Panc1 (cell line): ENCODE measurements at regions of chr1 and their contacts with region 1.

Region 1: DNA sequence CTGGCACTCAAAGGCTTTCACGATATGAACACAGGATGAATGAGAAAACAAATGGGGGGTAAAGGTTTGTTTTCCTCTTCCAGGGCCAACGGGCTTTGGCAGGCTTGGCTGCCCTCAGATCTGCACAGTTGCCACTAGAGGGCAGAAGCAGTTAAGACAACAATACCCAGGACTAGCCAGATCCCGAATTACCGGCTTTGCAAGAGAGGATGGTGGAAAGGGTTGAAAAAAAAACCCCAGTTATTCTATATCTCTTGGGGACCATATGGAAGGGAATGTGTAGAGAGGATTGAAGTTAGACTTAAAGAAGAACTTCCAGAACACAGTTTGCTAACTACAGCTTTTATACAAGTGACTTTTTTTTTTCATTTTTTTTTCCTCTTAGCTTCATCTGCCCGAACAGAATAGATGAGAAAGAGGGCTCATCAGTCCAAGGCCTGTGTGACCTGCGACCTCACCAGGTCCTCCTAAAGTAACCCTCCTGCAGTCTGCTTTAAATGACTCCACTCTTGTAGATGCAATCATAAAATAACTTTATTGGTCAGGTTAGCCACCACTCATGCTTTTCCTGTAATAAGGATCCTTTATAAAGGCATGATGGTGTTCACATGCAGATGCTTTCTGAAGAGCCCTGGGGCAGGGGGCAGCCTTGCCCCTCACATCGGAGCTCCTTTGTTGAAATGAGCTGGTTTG is 10.7 kb downstream of the FMOD start:
- DNase-seq: no peak
- ATAC-seq: peak; percentile 94
- H3K4me3 ChIP-seq: no peak overlapping the region
- H3K27ac ChIP-seq: no peak overlapping the region
- H3K4me1 ChIP-seq: no peaks in the 10 kb centered on the region; the same call in 1 of the 2 replicates
- H3K27me3 ChIP-seq: peaks cover 37% of the 10 kb centered on the region
- CTCF ChIP-seq: peak; percentile 92

Region 2: GRCh38 chr1:203316626-203317093 is 23.6 kb before region 1 on chr1:
- CTCF ChIA-PET with region 1: interaction called, 17 read pairs
- POLR2A ChIA-PET with region 1: no interaction called
- in situ Hi-C with region 1: no loop called
- intact Hi-C with region 1: no loop called
- DNase-seq: no peak
- ATAC-seq: peak; percentile 74
- H3K4me3 ChIP-seq: no peak overlapping the region
- H3K27ac ChIP-seq: no peak overlapping the region; the same call in 1 of the 2 replicates
- H3K4me1 ChIP-seq: no peaks in the 10 kb centered on the region; the same call in 1 of the 2 replicates
- H3K27me3 ChIP-seq: peaks cover 2% of the 10 kb centered on the region
- CTCF ChIP-seq: no peak

Region 3: DNA sequence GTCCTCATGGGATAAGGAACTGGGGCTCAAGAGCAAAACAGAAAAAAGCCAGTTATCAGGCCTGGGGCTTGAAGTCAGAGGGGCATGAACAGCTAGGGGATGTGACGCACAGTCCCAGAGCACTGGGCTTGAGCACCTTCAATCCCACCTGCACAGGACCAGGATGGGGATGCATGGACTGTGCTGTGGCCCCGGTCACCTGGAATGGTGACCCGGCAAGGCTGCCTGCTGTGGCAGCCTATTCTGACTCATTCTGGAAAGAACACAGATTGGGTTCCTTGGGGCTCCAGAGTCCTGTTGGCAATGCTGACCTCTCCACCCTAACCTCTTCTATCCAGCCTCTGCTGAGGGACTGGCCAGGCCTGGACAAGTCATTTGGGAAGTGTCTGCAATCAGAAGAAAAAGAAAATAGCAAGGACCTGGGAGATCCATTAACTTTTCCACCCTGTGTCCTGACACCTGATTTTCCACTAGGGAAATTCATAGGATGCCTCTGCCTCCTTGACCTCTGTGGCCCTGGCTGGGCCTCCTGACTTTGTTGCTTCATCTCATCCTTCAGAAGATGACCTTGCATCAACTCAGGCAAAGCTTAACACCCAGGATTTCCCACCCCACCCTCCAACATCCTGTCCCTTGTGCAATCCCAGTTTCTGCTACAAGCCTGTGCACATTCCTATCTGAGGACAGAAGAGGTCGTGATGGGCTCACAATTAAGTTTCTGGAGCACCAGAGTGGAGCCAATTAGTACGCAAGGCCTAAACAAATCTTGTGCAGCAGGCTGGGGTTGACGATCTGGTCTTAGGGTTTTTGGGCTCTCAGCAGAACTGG is 28.6 kb after region 1 on chr1:
- CTCF ChIA-PET with region 1: interaction called, 18 read pairs
- POLR2A ChIA-PET with region 1: no interaction called
- in situ Hi-C with region 1: no loop called
- intact Hi-C with region 1: no loop called
- DNase-seq: no peak
- ATAC-seq: no peak
- H3K4me3 ChIP-seq: no peak overlapping the region
- H3K27ac ChIP-seq: no peak overlapping the region
- H3K4me1 ChIP-seq: no peaks in the 10 kb centered on the region
- H3K27me3 ChIP-seq: peaks cover 6% of the 10 kb centered on the region; the same call in 1 of the 2 replicates
- CTCF ChIP-seq: no peak

Region 4: GRCh38 chr1:203475012-203475981 is 135.0 kb after region 1 on chr1 and contains the start of gene PRELP:
- CTCF ChIA-PET with region 1: no interaction called
- POLR2A ChIA-PET with region 1: interaction called, 10 read pairs
- in situ Hi-C with region 1: no loop called
- intact Hi-C with region 1: no loop called
- DNase-seq: no peak
- ATAC-seq: no peak
- H3K4me3 ChIP-seq: no peak within 1 kb of the TSS
- H3K27ac ChIP-seq: no peak within 1 kb of the TSS
- H3K4me1 ChIP-seq: no peaks in the 10 kb centered on the region
- H3K27me3 ChIP-seq: peaks cover 26% of the 10 kb centered on the region
- CTCF ChIP-seq: no peak
- total RNA-seq, gene PRELP: not detected

Region 5: DNA sequence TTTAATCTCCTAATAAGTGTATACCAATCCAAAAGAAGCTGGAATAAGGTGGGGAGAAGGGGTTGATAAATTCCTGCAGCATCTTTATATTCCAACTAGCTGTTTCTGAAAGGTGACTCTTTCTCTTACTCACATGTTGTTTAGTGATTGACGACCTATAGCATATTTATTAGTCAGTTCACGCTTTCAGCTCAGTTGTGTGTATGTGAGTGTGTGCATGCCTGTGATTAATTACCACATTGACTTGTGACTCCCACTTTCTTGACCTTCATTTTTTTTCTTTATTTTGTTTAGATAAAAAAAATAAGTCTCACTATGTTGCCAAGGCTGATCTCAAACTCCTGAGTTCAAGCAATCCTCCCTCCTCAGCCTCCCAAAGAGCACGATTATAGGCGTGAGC is 330.8 kb after region 1 on chr1:
- CTCF ChIA-PET with region 1: interaction called, 11 read pairs
- POLR2A ChIA-PET with region 1: no interaction called
- in situ Hi-C with region 1: no loop called
- intact Hi-C with region 1: no loop called
- DNase-seq: no peak
- ATAC-seq: no peak
- H3K4me3 ChIP-seq: no peak overlapping the region
- H3K27ac ChIP-seq: no peak overlapping the region
- H3K4me1 ChIP-seq: peaks cover 13% of the 10 kb centered on the region
- H3K27me3 ChIP-seq: no peaks in the 10 kb centered on the region
- CTCF ChIP-seq: no peak